MCF 10A (cell line): ENCODE measurements at regions of chr7 and their contacts with region 1.

Region 1: GRCh38 chr7:143408686-143409561 is at the start of gene EPHA1:
- DNase-seq: peak; percentile 86
- H3K4me3 Mint-ChIP-seq: peak within 1 kb of the TSS; percentile 72
- H3K27ac Mint-ChIP-seq: peak within 1 kb of the TSS; percentile 63
- H3K4me1 Mint-ChIP-seq: peaks cover 13% of the 10 kb centered on the region
- H3K27me3 Mint-ChIP-seq: no peaks in the 10 kb centered on the region
- CTCF ChIP-seq: peak; percentile 35
- total RNA-seq, gene EPHA1: 0.89 and 1.2 TPM in 2 replicates

Region 2: DNA sequence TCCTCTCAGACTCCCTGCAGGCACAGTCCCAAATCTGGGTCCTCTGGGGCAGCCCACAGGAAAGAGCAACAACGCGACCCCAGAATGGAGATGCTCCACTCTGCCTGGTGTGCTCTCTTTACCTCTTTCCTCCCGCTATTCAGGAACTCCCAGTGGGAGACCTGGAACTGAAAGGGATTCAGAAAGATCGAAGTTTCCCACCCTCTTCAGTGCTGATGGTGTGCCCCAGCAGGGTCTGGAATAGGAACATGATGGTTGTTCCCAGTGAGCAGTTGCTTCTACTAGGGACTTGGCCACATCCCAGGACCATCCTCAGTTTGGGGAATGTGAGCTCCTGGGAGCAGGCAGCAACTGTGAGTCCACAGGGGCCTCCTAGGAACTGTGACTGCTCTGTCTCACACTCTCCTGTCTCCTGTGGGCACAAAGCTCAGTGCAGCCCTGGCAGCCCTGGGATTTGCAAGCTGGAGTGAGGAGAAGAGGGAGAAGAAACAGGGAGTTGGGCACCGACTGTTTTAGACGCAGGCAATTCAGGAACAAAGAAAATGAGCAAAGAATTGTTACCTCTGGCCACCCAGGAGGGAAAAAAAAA is 338.9 kb before region 1 on chr7:
- CTCF ChIA-PET with region 1: no interaction called
- POLR2A ChIA-PET with region 1: no interaction called
- intact Hi-C with region 1: no loop called
- DNase-seq: no peak
- H3K4me3 Mint-ChIP-seq: no peak overlapping the region
- H3K27ac Mint-ChIP-seq: no peak overlapping the region
- H3K4me1 Mint-ChIP-seq: no peaks in the 10 kb centered on the region
- H3K27me3 Mint-ChIP-seq: no peaks in the 10 kb centered on the region
- CTCF ChIP-seq: no peak

Region 3: DNA sequence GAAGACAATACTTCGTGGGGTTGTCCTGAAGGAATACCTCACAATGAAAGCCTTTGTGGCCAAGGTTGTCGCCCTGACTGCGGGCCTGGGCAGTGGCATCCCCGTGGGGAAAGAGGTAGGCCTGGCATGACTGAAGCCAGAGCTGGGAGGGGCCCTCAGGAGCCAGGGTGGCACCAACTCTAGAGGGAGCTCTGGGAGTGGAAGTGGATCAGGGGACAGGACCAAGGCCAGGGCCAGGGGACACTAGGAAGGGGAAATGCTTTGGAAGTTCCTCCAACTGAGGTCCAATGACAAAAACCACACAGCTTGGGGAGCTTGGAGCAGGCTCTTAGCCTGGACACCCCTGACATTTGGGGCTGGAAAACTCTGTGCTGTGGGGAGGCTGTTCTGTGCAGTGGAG is 87.2 kb before region 1 on chr7:
- CTCF ChIA-PET with region 1: no interaction called
- POLR2A ChIA-PET with region 1: no interaction called
- intact Hi-C with region 1: loop called (anchors 2 kb)
- DNase-seq: peak; percentile 52
- H3K4me3 Mint-ChIP-seq: no peak overlapping the region
- H3K27ac Mint-ChIP-seq: no peak overlapping the region
- H3K4me1 Mint-ChIP-seq: peaks cover 26% of the 10 kb centered on the region
- H3K27me3 Mint-ChIP-seq: no peaks in the 10 kb centered on the region
- CTCF ChIP-seq: peak; percentile 34

Region 4: DNA sequence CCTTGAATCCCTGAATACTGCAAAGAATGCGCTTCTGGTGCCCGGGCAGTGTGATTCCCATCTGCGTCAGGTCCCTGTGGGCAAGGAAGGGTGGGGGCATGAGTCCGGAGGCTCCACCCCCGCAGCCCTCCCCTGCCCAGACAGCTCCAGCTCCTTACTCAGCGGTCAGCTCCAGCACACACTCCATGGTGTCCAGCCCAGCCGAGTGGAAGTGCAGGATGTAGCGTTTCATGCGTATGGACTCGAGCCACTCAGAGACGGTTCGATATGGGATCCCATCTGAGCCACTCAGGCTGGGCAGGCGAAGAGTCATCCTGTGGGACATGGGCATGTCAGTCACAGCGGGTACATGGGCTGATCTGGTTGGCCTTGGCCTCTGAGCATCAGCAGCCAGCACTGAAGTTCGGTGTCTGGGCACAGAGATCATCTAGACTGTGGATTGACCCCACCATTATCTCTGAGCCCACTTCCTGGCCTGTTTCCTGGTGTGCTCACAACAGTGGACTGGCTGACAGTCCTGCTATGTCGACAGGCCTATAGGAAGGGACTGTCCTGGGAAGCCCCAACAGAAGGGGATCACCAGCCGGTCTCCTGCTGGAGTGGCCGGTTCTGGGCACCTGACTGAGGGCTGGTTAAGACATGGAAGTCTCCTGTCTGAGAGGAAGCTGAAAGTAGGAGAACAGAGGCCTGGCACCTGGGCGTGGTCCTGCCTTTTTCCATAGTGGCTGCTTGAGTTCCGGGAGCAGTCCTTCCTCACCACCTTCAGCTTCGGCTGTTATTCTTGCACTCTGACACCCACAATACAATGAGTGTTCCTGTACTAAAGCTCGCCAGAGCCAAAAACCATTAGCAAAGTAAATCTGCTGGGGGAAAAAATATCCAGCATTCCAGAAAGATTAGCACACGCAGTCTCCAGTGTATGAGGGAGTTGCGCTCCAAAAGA is 17.2 kb before region 1 on chr7:
- CTCF ChIA-PET with region 1: interaction called, 11 read pairs
- POLR2A ChIA-PET with region 1: interaction called, 4 read pairs
- intact Hi-C with region 1: no loop called
- DNase-seq: no peak
- H3K4me3 Mint-ChIP-seq: no peak overlapping the region
- H3K27ac Mint-ChIP-seq: peak overlapping the region; percentile 63
- H3K4me1 Mint-ChIP-seq: peaks cover 17% of the 10 kb centered on the region
- H3K27me3 Mint-ChIP-seq: no peaks in the 10 kb centered on the region
- CTCF ChIP-seq: no peak